Breast epithelium (tissue), 4 donors: ENCODE measurements at regions of chr19 and their contacts with region 1.

Region 1: DNA sequence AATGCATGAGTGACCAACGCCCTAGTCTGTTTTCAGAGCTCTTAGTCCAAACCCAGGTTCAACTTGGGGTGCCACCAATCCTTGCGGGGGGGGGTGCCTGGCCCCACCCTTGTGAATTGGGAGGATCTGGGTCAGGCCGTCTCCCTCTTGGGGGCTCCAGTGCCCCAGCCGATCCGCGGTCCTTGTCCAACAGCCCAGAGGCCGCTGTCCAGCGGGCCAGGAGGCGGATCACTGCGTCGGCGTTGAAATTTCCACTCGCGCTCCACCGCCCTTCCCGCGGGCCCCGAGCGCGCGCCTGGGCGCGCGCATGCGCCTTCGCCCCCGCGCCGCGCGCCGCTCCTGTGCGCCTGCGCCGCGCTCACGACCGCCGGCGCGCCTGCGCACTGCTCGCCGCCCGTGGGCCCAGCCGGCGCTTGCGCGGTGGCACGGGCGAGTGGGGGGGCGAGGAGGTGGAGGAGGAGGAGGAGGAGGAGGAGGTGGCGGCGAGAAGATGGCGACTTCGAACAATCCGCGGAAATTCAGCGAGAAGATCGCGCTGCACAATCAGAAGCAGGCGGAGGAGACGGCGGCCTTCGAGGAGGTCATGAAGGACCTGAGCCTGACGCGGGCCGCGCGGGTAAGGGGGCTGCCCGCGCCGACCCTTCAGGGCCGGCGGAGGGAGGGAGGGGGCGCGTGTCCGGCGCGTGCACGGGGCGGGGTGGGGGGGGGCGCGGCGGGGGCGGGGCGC is at the start of gene CRTC1:
- DNase-seq: peak; percentile 82 to 90
- H3K4me3 ChIP-seq: peak within 1 kb of the TSS; percentile 53 to 88 (median 56)
- H3K27ac ChIP-seq: peak within 1 kb of the TSS; percentile 83 to 91
- H3K4me1 ChIP-seq: peaks cover 0 to 6% of the 10 kb centered on the region in 2 donors
- H3K27me3 ChIP-seq: no peaks in the 10 kb centered on the region
- CTCF ChIP-seq: no peak
- POLR2A ChIP-seq: peak; percentile 15
- total RNA-seq, gene CRTC1: 4.8 to 6.1 (median 5.9) TPM

Region 2: DNA sequence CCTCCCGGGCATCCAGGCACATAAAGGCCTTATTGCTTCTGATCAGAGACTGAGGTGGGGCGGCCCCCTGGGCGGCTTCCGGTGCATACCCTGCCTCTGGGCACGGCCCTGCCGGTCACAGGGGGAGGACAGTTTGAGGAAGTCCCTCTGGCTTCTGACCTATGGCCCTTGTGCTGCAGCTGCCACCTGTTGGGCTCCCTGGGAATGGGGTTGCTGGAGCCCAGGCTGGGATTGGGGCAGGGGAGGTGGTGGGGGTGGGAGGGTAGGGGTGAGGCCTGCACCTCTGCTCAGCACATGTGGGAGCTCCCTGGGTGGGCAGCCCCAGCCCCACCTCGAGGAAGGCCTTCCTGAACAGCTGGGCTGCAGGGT is 1359.4 kb before region 1 on chr19:
- intact Hi-C with region 1: loop called (anchors 5 kb)
- DNase-seq: no peak
- H3K4me3 ChIP-seq: peak overlapping the region in 2 of 3 donors; percentile 31 to 57
- H3K27ac ChIP-seq: peak overlapping the region; percentile 62 to 81
- H3K4me1 ChIP-seq: peaks cover 0 to 20% of the 10 kb centered on the region in 2 donors
- H3K27me3 ChIP-seq: peaks cover 0 to 3% of the 10 kb centered on the region in 2 donors
- CTCF ChIP-seq: no peak
- POLR2A ChIP-seq: no peak

Region 3: GRCh38 chr19:18612772-18613588 is 70.4 kb before region 1 on chr19 and contains the start of gene TMEM59L:
- intact Hi-C with region 1: no loop called
- DNase-seq: no peak
- H3K4me3 ChIP-seq: peak within 1 kb of the TSS; percentile 27 to 69 (median 54)
- H3K27ac ChIP-seq: no peak within 1 kb of the TSS
- H3K4me1 ChIP-seq: peaks cover 0 to 12% of the 10 kb centered on the region in 2 donors
- H3K27me3 ChIP-seq: peaks cover 15 to 63% of the 10 kb centered on the region in 2 donors
- CTCF ChIP-seq: no peak
- POLR2A ChIP-seq: no peak
- total RNA-seq, gene TMEM59L: 1.2 to 2.3 TPM in 2 of 3 donors, not detected in the other

Region 4: GRCh38 chr19:18629166-18630088 is 53.9 kb before region 1 on chr19:
- intact Hi-C with region 1: no loop called
- DNase-seq: no peak
- H3K4me3 ChIP-seq: no peak overlapping the region
- H3K27ac ChIP-seq: no peak overlapping the region
- H3K4me1 ChIP-seq: no peaks in the 10 kb centered on the region
- H3K27me3 ChIP-seq: no peaks in the 10 kb centered on the region
- CTCF ChIP-seq: no peak
- POLR2A ChIP-seq: no peak

Region 5: GRCh38 chr19:18657590-18658365 is 25.6 kb before region 1 on chr19:
- intact Hi-C with region 1: loop called (anchors 1 kb)
- DNase-seq: no peak
- H3K4me3 ChIP-seq: no peak overlapping the region
- H3K27ac ChIP-seq: peak overlapping the region; percentile 56 to 94
- H3K4me1 ChIP-seq: peaks cover 0 to 3% of the 10 kb centered on the region in 2 donors
- H3K27me3 ChIP-seq: no peaks in the 10 kb centered on the region
- CTCF ChIP-seq: no peak
- POLR2A ChIP-seq: no peak

Region 6: GRCh38 chr19:18746401-18747325 is 63.3 kb after region 1 on chr19:
- intact Hi-C with region 1: no loop called
- DNase-seq: no peak
- H3K4me3 ChIP-seq: no peak overlapping the region
- H3K27ac ChIP-seq: no peak overlapping the region
- H3K4me1 ChIP-seq: peaks cover 0 to 7% of the 10 kb centered on the region in 2 donors
- H3K27me3 ChIP-seq: no peaks in the 10 kb centered on the region
- CTCF ChIP-seq: no peak
- POLR2A ChIP-seq: no peak